Caco-2 (cell line): ENCODE measurements at regions of chr16 and their contacts with region 1.

Region 1: DNA sequence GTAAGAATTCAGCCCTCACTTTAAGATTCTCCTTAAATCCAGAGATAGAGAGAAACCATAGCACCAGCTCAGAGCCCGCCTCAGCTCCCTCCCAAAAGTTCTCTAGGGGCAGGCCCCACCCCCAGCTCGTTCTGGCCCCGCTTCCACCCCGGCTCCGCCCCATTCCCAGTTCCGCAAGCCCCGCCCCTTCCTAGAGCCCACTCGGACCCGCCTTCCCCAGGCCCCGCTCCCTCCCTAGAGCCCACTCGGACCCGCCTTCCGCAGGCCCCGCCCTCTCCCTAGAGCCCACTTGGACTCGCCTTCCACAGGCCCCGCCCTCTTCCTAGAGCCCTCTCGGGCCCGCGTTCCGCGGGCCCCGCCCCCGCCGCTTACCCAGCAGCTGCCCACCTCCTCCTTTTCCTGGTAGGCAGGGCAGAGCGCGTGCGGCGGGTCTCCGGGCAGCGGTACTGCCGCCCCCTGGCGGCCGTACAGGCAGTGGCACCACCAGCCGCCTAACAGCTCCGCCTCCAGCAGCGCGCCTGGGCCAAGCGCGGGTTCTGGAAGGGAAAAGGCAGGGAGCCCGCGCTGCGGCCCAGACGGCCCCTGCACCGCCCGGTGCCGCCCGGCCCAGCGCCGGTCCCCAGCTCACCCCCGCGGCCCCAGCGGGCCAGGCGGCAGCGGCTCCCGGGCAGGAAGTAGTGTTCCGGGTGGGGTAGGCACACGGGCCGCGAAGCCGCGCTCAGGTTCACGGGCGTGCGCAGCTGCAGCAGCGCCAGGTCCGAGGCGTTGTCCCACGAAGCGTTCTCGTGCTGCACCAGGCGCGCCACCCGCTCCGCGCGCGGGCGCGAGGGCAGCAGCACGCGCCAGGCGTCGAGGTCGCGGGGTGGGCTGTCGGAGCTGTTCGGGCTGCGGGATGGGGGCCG is 6.8 kb upstream of the PRSS8 start:
- DNase-seq: peak; percentile 98 to 99
- H3K4me3 ChIP-seq: peak overlapping the region; percentile 46
- H3K4me3 Mint-ChIP-seq: peak overlapping the region; percentile 66
- H3K27ac Mint-ChIP-seq: peak overlapping the region; percentile 83
- H3K4me1 ChIP-seq: peaks cover 54% of the 10 kb centered on the region
- H3K4me1 Mint-ChIP-seq: peaks cover 20% of the 10 kb centered on the region
- H3K27me3 ChIP-seq: no peaks in the 10 kb centered on the region
- H3K27me3 Mint-ChIP-seq: no peaks in the 10 kb centered on the region
- CTCF ChIP-seq: peak; percentile 81 to 93

Region 2: DNA sequence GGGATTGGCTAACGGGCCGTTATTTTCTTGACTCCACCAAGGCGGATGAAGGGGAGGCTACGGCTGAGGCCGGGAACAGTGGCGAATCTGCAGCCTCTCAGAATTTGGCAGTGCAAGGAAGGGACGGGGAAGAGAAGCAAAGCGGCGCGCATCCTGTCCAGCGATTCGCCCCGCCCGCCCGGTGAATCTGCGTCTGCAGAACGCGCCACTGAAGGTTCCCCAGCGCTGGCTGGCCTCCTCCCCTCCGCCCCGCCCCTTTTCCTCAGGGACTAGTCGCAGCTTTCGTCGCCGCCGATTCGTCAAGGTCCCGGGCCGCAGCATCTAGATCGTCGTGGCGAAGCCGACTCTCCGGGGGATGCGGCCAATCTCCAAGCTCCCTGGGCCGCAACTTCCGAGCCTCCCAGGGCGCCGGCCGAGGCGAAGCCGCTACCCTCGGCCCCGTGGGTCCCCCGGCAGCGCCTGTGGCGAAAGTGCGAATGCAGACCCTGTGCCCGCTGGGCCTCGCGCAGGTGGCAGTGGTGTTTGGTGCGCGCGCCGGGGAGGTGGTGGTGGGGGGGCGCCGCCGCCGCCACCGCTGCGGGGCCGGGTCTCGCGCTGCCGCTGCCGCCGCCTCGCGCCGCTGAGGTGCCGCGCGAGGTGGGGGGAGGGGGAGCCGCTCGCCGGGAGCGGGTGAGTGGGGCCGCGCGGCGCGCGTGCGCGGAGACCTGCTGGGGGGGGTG is 184.7 kb before region 1 on chr16 and contains the start of gene SETD1A:
- CTCF ChIA-PET with region 1: interaction called, 4 read pairs
- POLR2A ChIA-PET with region 1: no interaction called
- intact Hi-C with region 1: loop called (anchors 1 kb)
- DNase-seq: peak; percentile 93 to 94
- H3K4me3 ChIP-seq: peak within 1 kb of the TSS; percentile 95
- H3K4me3 Mint-ChIP-seq: peak within 1 kb of the TSS; percentile 87
- H3K27ac Mint-ChIP-seq: peak within 1 kb of the TSS; percentile 95
- H3K4me1 ChIP-seq: no peaks in the 10 kb centered on the region; the same call in 1 of the 2 replicates
- H3K4me1 Mint-ChIP-seq: peaks cover 13% of the 10 kb centered on the region
- H3K27me3 ChIP-seq: no peaks in the 10 kb centered on the region
- H3K27me3 Mint-ChIP-seq: no peaks in the 10 kb centered on the region
- CTCF ChIP-seq: no peak
- total RNA-seq, gene SETD1A: 21.5 and 26.3 TPM in 2 replicates

Region 3: GRCh38 chr16:31032736-31033708 is 109.3 kb before region 1 on chr16 and contains the start of gene STX4:
- CTCF ChIA-PET with region 1: no interaction called
- POLR2A ChIA-PET with region 1: no interaction called
- intact Hi-C with region 1: loop called (anchors 5 kb)
- DNase-seq: peak; percentile 92 to 93
- H3K4me3 ChIP-seq: peak within 1 kb of the TSS; percentile 98
- H3K4me3 Mint-ChIP-seq: peak within 1 kb of the TSS; percentile 96
- H3K27ac Mint-ChIP-seq: peak within 1 kb of the TSS; percentile 81
- H3K4me1 ChIP-seq: no peaks in the 10 kb centered on the region
- H3K4me1 Mint-ChIP-seq: peaks cover 7% of the 10 kb centered on the region
- H3K27me3 ChIP-seq: no peaks in the 10 kb centered on the region
- H3K27me3 Mint-ChIP-seq: no peaks in the 10 kb centered on the region
- CTCF ChIP-seq: no peak
- total RNA-seq, gene STX4: 27.9 and 29.2 TPM in 2 replicates

Region 4: GRCh38 chr16:31064882-31065461 is 77.4 kb before region 1 on chr16:
- CTCF ChIA-PET with region 1: no interaction called
- POLR2A ChIA-PET with region 1: no interaction called
- intact Hi-C with region 1: no loop called
- DNase-seq: no peak
- H3K4me3 ChIP-seq: no peak overlapping the region
- H3K4me3 Mint-ChIP-seq: no peak overlapping the region
- H3K27ac Mint-ChIP-seq: no peak overlapping the region
- H3K4me1 ChIP-seq: no peaks in the 10 kb centered on the region
- H3K4me1 Mint-ChIP-seq: no peaks in the 10 kb centered on the region
- H3K27me3 ChIP-seq: no peaks in the 10 kb centered on the region
- H3K27me3 Mint-ChIP-seq: no peaks in the 10 kb centered on the region
- CTCF ChIP-seq: no peak

Region 5: GRCh38 chr16:31094424-31095120 is 47.8 kb before region 1 on chr16 and contains the start of gene VKORC1:
- CTCF ChIA-PET with region 1: interaction called, 3 read pairs
- POLR2A ChIA-PET with region 1: no interaction called
- intact Hi-C with region 1: loop called (anchors 1 kb)
- DNase-seq: peak; percentile 96 to 97
- H3K4me3 ChIP-seq: peak within 1 kb of the TSS; percentile 97
- H3K4me3 Mint-ChIP-seq: peak within 1 kb of the TSS; percentile 98
- H3K27ac Mint-ChIP-seq: peak within 1 kb of the TSS; percentile 92
- H3K4me1 ChIP-seq: no peaks in the 10 kb centered on the region
- H3K4me1 Mint-ChIP-seq: peaks cover 15% of the 10 kb centered on the region
- H3K27me3 ChIP-seq: no peaks in the 10 kb centered on the region
- H3K27me3 Mint-ChIP-seq: no peaks in the 10 kb centered on the region
- CTCF ChIP-seq: no peak
- total RNA-seq, gene VKORC1: 61.3 and 61.4 TPM in 2 replicates

Region 6: GRCh38 chr16:31117391-31118197 is 24.8 kb before region 1 on chr16 and contains the start of gene KAT8:
- CTCF ChIA-PET with region 1: interaction called, 43 read pairs
- POLR2A ChIA-PET with region 1: interaction called, 61 read pairs
- intact Hi-C with region 1: loop called (anchors 1 kb)
- DNase-seq: peak; percentile 97
- H3K4me3 ChIP-seq: peak within 1 kb of the TSS; percentile 55
- H3K4me3 Mint-ChIP-seq: peak within 1 kb of the TSS; percentile 88
- H3K27ac Mint-ChIP-seq: peak within 1 kb of the TSS; percentile 88
- H3K4me1 ChIP-seq: peaks cover 16% of the 10 kb centered on the region
- H3K4me1 Mint-ChIP-seq: peaks cover 16% of the 10 kb centered on the region
- H3K27me3 ChIP-seq: no peaks in the 10 kb centered on the region
- H3K27me3 Mint-ChIP-seq: no peaks in the 10 kb centered on the region
- CTCF ChIP-seq: no peak
- total RNA-seq, gene KAT8: 46.2 and 50.2 TPM in 2 replicates

Region 7: DNA sequence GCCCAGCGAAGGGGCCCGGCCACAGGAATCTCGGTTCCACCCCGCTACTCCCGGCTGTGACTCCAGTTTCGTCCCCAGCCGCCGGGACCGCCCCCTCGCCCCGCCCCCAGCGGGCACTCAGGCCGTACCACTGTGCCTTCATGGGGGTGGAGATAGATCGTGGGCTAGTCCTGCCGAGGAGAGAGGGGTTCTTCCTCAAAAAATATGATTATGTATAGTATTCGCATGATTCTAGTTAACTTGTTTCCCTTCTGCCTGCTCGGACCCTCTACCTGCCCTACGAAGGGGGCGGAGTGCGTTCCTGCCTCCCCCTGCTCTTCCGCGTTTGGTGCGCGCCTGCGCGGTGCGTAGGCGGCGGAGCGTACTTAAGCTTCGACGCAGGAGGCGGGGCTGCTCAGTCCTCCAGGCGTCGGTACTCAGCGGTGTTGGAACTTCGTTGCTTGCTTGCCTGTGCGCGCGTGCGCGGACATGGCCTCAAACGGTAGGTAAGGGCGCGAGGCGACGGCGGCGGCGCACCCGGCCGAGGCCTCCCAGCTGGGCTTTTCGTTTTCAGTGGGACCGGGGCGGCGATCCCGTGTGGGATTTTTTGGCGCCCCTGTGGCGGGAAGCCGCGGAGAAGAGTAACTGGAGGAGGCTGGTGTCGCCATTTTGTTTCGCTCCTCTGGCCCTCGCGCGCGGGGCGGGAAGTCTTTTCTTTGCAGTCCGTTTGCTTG is 37.5 kb after region 1 on chr16 and contains the start of gene FUS:
- CTCF ChIA-PET with region 1: interaction called, 7 read pairs
- POLR2A ChIA-PET with region 1: interaction called, 30 read pairs
- intact Hi-C with region 1: no loop called
- DNase-seq: peak; percentile 88 to 90
- H3K4me3 ChIP-seq: peak within 1 kb of the TSS; percentile 95
- H3K4me3 Mint-ChIP-seq: peak within 1 kb of the TSS; percentile 97
- H3K27ac Mint-ChIP-seq: peak within 1 kb of the TSS; percentile 100
- H3K4me1 ChIP-seq: no peaks in the 10 kb centered on the region
- H3K4me1 Mint-ChIP-seq: peaks cover 4% of the 10 kb centered on the region
- H3K27me3 ChIP-seq: no peaks in the 10 kb centered on the region
- H3K27me3 Mint-ChIP-seq: no peaks in the 10 kb centered on the region
- CTCF ChIP-seq: no peak
- total RNA-seq, gene FUS: 489 and 490 TPM in 2 replicates